OCI-LY7 (cell line): ENCODE measurements at regions of chr13 and their contacts with region 1.

Region 1: GRCh38 chr13:54911454-54911853 is 1882.8 kb downstream of the OLFM4 start:
- DNase-seq: no peak
- H3K4me3 ChIP-seq: no peak overlapping the region
- H3K27ac ChIP-seq: no peak overlapping the region
- H3K4me1 ChIP-seq: no peaks in the 10 kb centered on the region
- CTCF ChIP-seq: no peak

Region 2: GRCh38 chr13:54975676-54976075 is 64.2 kb after region 1 on chr13:
- CTCF ChIA-PET with region 1: no interaction called
- POLR2A ChIA-PET with region 1: no interaction called
- intact Hi-C with region 1: loop called (anchors 10 kb)
- DNase-seq: no peak
- H3K4me3 ChIP-seq: no peak overlapping the region
- H3K27ac ChIP-seq: no peak overlapping the region
- H3K4me1 ChIP-seq: no peaks in the 10 kb centered on the region
- CTCF ChIP-seq: no peak